ENCODE measurements at regions of chr22 and their contacts with region 1.

Region 1: DNA sequence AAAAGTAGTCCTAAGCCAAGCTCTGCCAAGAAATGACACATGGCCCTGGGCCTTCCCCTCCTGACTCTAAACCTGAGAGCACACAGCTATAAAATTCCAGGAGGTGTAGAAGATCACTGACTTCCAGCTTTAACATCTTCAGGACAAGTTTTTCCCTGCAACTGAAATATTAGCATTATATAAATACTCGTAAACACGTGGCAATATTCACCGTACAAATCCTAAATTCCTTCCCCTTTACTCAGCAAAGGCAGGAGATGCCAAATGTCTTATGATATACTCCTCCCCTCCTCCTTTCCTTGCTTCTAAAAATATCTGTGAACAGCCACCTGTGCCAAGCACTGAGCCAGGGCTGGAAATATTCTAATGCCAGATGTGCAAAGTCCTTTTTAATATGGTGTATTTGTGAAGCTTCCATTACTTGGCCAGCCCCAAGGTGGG is 194.0 kb downstream of the LARGE1 start:
- DNase-seq: no peak
- ATAC-seq: no peak
- H3K4me3 Mint-ChIP-seq: no peak overlapping the region
- H3K27ac Mint-ChIP-seq: no peak overlapping the region
- H3K4me1 Mint-ChIP-seq: peaks cover 0 to 3% (median 1%) of the 10 kb centered on the region in 4 donors
- H3K27me3 Mint-ChIP-seq: peaks cover 0 to 13% (median 1%) of the 10 kb centered on the region in 5 donors

Region 2: DNA sequence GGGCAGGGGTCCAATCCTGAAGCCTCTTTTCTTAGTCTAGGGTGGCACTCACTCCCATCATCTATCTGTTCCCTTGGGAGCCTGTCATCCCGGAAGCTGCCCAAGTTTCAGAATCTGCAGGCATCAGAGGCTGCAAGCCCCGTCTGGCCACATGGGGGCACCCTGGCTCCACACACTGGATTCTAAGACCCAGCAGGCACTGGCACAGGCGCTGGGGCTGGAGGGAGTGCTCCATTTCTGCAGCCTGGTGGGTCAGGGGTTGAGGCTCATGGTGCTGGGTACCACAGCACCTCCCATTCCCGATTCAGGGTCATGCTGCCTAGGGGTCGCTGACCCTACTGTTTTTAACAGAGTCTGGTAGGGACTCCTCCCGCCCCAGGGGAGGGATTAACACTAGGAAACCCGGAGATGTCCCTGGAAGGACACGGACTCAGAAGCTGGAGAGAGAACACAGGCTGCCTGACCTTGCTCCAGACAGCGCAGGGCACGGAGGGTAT is 424.2 kb before region 1 on chr22:
- POLR2A ChIA-PET with region 1: interaction called, 11 read pairs
- DNase-seq: peak in 9 of 10 donors; percentile 1 to 68 (median 15)
- ATAC-seq: no peak
- H3K4me3 Mint-ChIP-seq: no peak overlapping the region
- H3K27ac Mint-ChIP-seq: no peak overlapping the region
- H3K4me1 Mint-ChIP-seq: peaks cover 0 to 41% (median 0%) of the 10 kb centered on the region in 4 donors
- H3K27me3 Mint-ChIP-seq: peaks cover 0 to 7% (median 4%) of the 10 kb centered on the region in 5 donors

Region 3: GRCh38 chr22:33747576-33748180 is 21.4 kb after region 1 on chr22:
- POLR2A ChIA-PET with region 1: no interaction called
- DNase-seq: no peak
- ATAC-seq: no peak
- H3K4me3 Mint-ChIP-seq: no peak overlapping the region
- H3K27ac Mint-ChIP-seq: no peak overlapping the region
- H3K4me1 Mint-ChIP-seq: peaks cover 0 to 4% (median 1%) of the 10 kb centered on the region in 4 donors
- H3K27me3 Mint-ChIP-seq: peaks cover 0 to 9% (median 0%) of the 10 kb centered on the region in 5 donors

Measured in naive thymus-derived CD8-positive, alpha-beta T cell (primary cell).